AG04449 (cell line): ENCODE measurements at regions of chr5 and their contacts with region 1.

Region 1: GRCh38 chr5:139633295-139634027 is 14.7 kb upstream of the CXXC5 start:
- DNase-seq: no peak
- H3K4me3 ChIP-seq: no peak overlapping the region
- CTCF ChIP-seq: peak; percentile 95

Region 2: GRCh38 chr5:139611703-139612584 is 21.5 kb before region 1 on chr5:
- CTCF ChIA-PET with region 1: interaction called, 32 read pairs
- POLR2A ChIA-PET with region 1: no interaction called
- DNase-seq: no peak
- H3K4me3 ChIP-seq: no peak overlapping the region
- CTCF ChIP-seq: no peak

Region 3: GRCh38 chr5:139678751-139679750 is 45.6 kb after region 1 on chr5:
- CTCF ChIA-PET with region 1: interaction called, 45 read pairs
- POLR2A ChIA-PET with region 1: no interaction called
- DNase-seq: no peak
- H3K4me3 ChIP-seq: no peak overlapping the region
- CTCF ChIP-seq: no peak

Region 4: DNA sequence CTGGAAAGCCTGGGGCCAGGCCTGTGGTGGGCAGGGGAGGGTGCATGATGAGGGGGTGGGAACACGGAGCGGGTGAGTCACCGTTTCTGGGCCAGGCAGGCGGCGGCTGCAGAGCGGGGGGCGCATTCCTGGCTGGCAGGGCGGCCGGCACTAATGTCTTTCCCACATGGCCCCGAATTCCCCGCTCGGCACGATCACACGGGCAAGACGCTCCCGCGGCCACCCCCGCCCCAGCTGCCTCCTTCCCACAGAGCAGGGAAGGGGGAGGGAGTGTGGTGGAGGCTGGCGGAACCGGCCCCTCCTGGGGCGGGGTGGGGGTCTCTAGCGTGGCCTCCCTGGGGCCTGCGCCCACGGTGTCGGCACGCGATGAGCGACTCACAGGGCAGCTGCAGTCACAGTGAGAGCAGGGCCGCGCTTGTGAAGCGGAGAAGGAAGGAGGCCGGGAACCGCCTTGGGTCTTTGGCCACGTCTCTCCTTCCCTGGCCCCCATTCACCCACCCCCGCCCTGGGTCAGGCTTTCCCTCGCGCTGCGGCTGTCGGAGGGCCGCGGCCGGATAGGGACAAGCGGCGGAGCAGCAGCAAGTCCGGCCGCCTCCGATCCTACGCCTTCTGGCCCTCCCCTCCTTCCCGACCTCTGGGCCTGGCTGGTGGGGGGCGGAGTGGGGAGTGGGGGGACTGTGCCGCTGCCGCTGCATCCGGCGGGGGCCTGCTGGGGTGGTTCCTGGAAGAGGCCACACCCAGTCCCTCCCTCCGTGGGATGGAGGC is 63.6 kb after region 1 on chr5:
- CTCF ChIA-PET with region 1: interaction called, 263 read pairs
- POLR2A ChIA-PET with region 1: interaction called, 3 read pairs
- DNase-seq: peak; percentile 78
- H3K4me3 ChIP-seq: peak overlapping the region; percentile 41
- CTCF ChIP-seq: no peak

Region 5: DNA sequence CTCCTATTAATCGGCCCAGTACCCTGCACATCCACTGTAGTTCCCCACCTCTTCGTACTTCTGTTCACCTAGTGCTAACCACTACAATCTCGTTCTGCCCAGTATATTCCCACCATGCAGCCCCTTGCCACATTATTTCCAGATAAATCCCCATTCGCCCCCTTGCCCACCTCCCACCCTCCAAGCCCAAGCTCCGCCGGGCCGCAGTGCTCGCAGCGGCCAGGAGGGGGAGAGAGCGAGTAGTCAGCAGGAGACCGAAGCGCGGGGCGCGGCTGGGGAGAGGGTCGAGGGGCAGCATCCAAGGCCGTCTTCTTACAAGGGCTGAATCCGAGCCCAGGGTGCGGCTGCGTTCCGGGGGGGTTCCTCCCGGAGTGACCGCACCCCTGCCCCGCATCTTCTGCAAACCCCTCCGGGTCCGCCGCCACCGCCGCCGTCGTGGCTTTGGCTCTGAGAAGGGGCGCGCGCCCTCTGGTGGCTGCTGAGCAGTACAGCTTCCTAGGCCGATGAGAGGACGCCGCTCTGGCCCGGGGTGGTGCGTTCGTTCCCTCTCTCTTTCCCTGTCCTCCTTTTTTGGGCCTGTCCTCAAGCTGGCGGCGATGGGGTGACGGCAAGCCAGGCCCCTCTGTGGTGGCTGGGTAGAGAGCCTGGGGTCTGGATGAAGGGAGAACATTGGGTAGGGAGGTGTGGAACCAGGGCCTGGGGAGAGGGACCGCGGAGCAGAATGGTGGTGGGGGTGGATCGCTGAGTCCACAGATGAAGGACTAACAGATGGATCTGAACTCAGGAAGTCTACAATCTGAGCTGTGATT is 132.2 kb after region 1 on chr5:
- CTCF ChIA-PET with region 1: interaction called, 795 read pairs
- POLR2A ChIA-PET with region 1: interaction called, 3 read pairs
- DNase-seq: no peak
- H3K4me3 ChIP-seq: peak overlapping the region; percentile 72
- CTCF ChIP-seq: peak; percentile 87

Region 6: GRCh38 chr5:139844472-139845145 is 211.1 kb after region 1 on chr5:
- CTCF ChIA-PET with region 1: interaction called, 20 read pairs
- POLR2A ChIA-PET with region 1: no interaction called
- DNase-seq: peak; percentile 10
- H3K4me3 ChIP-seq: no peak overlapping the region
- CTCF ChIP-seq: peak; percentile 86